Mammary epithelial cell (primary cell): ENCODE measurements at regions of chr2 and their contacts with region 1.

Region 1: DNA sequence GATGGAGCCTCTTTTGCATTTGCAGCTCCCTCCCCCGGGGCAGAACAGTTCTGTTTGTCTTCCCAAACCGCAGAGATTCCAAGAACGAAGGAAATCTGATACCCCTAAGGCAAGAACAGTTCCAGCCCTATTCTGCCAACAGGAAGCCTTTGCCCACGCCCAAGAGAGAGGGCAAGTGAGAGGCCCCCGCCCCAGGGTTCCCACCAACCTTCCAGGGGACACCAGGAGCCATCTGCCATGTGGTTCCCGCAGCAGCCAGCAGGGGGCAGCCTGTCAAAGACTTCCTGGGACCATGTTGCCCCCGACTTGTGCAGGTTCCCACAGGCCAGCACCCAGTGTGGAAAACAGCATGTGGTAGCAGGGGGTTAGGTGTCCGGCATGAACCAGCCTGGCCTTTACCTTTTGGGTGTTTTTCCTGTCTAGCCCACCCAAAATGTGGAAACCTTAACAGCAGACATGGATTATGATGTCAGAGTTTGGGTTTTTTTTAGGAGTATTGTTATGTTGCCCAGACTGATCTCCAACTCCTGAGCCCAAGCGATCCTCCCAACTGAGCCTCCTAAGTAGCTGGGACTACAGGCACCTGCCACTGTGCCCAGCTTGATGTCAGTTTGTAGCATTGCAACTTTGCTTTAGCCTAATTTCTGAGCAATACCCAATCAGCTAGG is 21.7 kb upstream of the EFHD1 start:
- DNase-seq: peak; percentile 79
- H3K4me3 ChIP-seq: no peak overlapping the region
- H3K27ac ChIP-seq: no peak overlapping the region
- H3K4me1 ChIP-seq: peaks cover 16% of the 10 kb centered on the region
- H3K27me3 ChIP-seq: no peaks in the 10 kb centered on the region
- CTCF ChIP-seq: peak; percentile 88 to 89

Region 2: GRCh38 chr2:232668805-232669444 is 57.2 kb after region 1 on chr2:
- CTCF ChIA-PET with region 1: interaction called, 5 read pairs
- dilution Hi-C with region 1: no loop called
- in situ Hi-C with region 1: no loop called
- intact Hi-C with region 1: loop called (anchors 1 kb)
- DNase-seq: no peak
- H3K4me3 ChIP-seq: no peak overlapping the region
- H3K27ac ChIP-seq: no peak overlapping the region
- H3K4me1 ChIP-seq: no peaks in the 10 kb centered on the region
- H3K27me3 ChIP-seq: no peaks in the 10 kb centered on the region
- CTCF ChIP-seq: peak; percentile 46 to 68

Region 3: GRCh38 chr2:232761301-232761907 is 149.7 kb after region 1 on chr2:
- CTCF ChIA-PET with region 1: no interaction called
- dilution Hi-C with region 1: no loop called
- in situ Hi-C with region 1: no loop called
- intact Hi-C with region 1: loop called (anchors 5 kb)
- DNase-seq: peak; percentile 39
- H3K4me3 ChIP-seq: no peak overlapping the region
- H3K27ac ChIP-seq: no peak overlapping the region
- H3K4me1 ChIP-seq: no peaks in the 10 kb centered on the region
- H3K27me3 ChIP-seq: no peaks in the 10 kb centered on the region
- CTCF ChIP-seq: peak; percentile 65 to 67

Region 4: GRCh38 chr2:233053928-233054784 is 442.5 kb after region 1 on chr2:
- CTCF ChIA-PET with region 1: no interaction called
- dilution Hi-C with region 1: no loop called
- in situ Hi-C with region 1: no loop called
- intact Hi-C with region 1: loop called (anchors 5 kb)
- DNase-seq: peak; percentile 35
- H3K4me3 ChIP-seq: no peak overlapping the region
- H3K27ac ChIP-seq: no peak overlapping the region
- H3K4me1 ChIP-seq: peaks cover 7% of the 10 kb centered on the region
- H3K27me3 ChIP-seq: no peaks in the 10 kb centered on the region
- CTCF ChIP-seq: peak; percentile 74 to 92